ENCODE measurements at regions of chr20 and their contacts with region 1.

Region 1: DNA sequence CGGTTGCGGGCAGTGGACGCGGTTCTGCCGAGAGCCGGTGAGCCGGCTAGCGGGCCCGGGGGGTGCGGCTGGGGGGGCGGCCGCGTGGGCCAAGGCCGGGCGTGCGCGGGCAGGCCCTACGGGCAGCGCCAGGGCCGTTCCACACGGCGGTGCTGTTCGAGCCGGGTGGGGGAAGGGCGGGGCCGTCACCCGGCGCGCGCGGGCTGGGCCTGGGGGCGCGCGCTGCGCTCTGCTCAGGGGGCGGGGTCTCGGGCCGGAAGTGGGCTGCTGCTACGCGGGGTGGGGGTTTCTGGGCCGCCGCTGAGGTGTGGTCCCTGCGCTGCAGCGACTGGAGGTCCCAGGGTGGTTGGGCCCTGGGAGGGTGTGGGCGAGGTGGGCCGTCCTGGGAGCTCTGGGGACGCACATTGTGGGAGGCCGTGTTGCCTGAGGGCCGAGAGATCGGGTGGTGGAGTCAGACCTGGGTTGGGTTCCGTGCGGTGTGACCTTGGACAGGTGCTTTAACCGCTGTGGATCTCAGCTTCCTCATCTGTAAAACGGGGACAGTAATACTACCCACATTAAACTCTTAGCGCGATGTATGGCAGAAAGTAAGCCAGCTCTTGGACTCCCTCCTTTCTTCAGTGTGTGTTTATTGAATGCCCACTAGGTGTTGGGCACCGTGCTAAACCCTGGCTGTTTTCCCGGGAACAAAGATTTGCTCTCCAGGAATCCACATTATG is 397 bp downstream of the MAPRE1 start:
- DNase-seq: peak; percentile 85
- ATAC-seq: peak; percentile 76
- H3K4me3 Mint-ChIP-seq: peak overlapping the region; percentile 87
- H3K27ac Mint-ChIP-seq: peak overlapping the region; percentile 92
- H3K4me1 Mint-ChIP-seq: peaks cover 37% of the 10 kb centered on the region
- H3K27me3 Mint-ChIP-seq: no peaks in the 10 kb centered on the region

Region 2: DNA sequence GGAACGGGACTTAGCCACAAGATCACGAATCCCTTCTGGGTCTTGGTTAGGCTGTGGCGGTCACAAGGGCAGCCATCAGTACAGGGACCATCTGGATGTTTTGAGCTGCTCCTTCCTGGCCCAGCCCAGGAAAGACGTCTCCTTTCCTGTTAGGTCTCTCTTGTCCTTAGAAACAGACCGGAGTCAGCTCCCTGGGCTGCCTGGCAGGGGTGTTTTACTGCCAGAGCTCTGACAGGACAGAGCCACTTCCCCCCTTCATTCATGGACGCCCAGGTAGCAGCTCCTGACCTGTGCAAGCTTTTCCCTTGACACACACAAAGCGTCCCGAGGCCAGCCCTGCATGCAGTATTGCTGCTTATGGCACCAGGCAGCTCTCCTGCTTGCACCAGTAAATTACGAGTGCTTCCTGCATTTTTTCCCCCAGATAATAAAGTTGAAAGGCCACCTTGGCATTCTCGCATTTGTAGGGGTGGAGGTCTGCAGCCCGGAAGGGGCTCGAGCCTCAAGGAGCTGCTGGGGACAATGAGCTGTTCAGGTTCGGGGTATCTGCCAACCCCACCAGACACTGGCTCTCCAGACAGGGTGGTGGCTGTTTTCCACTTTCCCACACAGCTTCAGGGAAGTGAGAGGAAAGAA is 322.4 kb before region 1 on chr20:
- CTCF ChIA-PET with region 1: no interaction called
- POLR2A ChIA-PET with region 1: no interaction called
- intact Hi-C with region 1: no loop called
- DNase-seq: no peak
- ATAC-seq: no peak
- H3K4me3 Mint-ChIP-seq: no peak overlapping the region
- H3K27ac Mint-ChIP-seq: no peak overlapping the region
- H3K4me1 Mint-ChIP-seq: peaks cover 34% of the 10 kb centered on the region
- H3K27me3 Mint-ChIP-seq: no peaks in the 10 kb centered on the region

Region 3: DNA sequence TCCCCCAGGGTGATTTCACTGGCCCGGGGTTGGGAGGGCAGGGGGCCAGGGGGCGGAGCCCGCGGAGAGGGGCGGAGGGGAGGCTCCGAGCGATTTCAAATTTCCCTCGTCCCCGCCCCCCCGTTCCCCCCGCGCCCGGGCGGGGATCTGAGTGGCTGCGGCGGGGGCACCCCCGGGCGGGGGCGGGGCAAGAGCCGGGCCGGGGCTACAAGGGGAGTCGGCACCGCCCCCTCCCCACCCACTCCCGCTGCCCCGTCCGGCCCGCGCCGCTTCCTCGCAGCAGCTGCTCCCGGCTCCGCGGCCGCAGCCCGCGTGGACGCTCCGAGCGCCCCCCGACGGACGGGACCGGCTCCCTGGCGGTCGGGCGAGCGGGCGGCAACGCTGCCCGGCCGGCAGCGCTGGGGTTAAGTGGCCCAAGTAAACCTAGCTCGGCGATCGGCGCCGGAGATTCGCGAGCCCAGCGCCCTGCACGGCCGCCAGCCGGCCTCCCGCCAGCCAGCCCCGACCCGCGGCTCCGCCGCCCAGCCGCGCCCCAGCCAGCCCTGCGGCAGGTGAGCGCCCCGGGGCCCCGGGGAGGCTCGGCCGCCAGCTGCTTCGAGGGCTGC is 57.9 kb before region 1 on chr20 and contains the start of gene DNMT3B:
- CTCF ChIA-PET with region 1: interaction called, 5 read pairs
- POLR2A ChIA-PET with region 1: no interaction called
- intact Hi-C with region 1: loop called in 1 of 2 experiments (anchors 1 kb)
- DNase-seq: peak; percentile 81
- ATAC-seq: peak; percentile 74
- H3K4me3 Mint-ChIP-seq: peak within 1 kb of the TSS; percentile 74
- H3K27ac Mint-ChIP-seq: peak within 1 kb of the TSS; percentile 22
- H3K4me1 Mint-ChIP-seq: peaks cover 10% of the 10 kb centered on the region
- H3K27me3 Mint-ChIP-seq: peaks cover 7% of the 10 kb centered on the region
- total RNA-seq, gene DNMT3B: 1.4 to 1.6 TPM

Region 4: GRCh38 chr20:32839227-32839981 is 19.3 kb after region 1 on chr20:
- CTCF ChIA-PET with region 1: interaction called, 5 read pairs
- POLR2A ChIA-PET with region 1: interaction called, 4 read pairs
- intact Hi-C with region 1: loop called in 1 of 2 experiments (anchors 1 kb)
- DNase-seq: peak; percentile 47
- ATAC-seq: peak; percentile 90
- H3K4me3 Mint-ChIP-seq: no peak overlapping the region
- H3K27ac Mint-ChIP-seq: peak overlapping the region; percentile 72
- H3K4me1 Mint-ChIP-seq: peaks cover 52% of the 10 kb centered on the region
- H3K27me3 Mint-ChIP-seq: no peaks in the 10 kb centered on the region

Region 5: GRCh38 chr20:32966881-32967781 is 147.0 kb after region 1 on chr20:
- CTCF ChIA-PET with region 1: no interaction called
- POLR2A ChIA-PET with region 1: no interaction called
- intact Hi-C with region 1: loop called in 1 of 2 experiments (anchors 2 kb)
- DNase-seq: peak; percentile 79
- ATAC-seq: peak; percentile 29
- H3K4me3 Mint-ChIP-seq: peak overlapping the region; percentile 53
- H3K27ac Mint-ChIP-seq: no peak overlapping the region
- H3K4me1 Mint-ChIP-seq: peaks cover 14% of the 10 kb centered on the region
- H3K27me3 Mint-ChIP-seq: no peaks in the 10 kb centered on the region

Region 6: GRCh38 chr20:33014336-33015113 is 194.4 kb after region 1 on chr20:
- CTCF ChIA-PET with region 1: no interaction called
- POLR2A ChIA-PET with region 1: no interaction called
- intact Hi-C with region 1: no loop called
- DNase-seq: no peak
- ATAC-seq: no peak
- H3K4me3 Mint-ChIP-seq: no peak overlapping the region
- H3K27ac Mint-ChIP-seq: no peak overlapping the region
- H3K4me1 Mint-ChIP-seq: peaks cover 2% of the 10 kb centered on the region
- H3K27me3 Mint-ChIP-seq: no peaks in the 10 kb centered on the region